Activated CD4-positive, alpha-beta T cell treated with anti-CD3 and anti-CD28 coated beads for 36 hours (primary cell): ENCODE measurements at regions of chr22 and their contacts with region 1.

Region 1: DNA sequence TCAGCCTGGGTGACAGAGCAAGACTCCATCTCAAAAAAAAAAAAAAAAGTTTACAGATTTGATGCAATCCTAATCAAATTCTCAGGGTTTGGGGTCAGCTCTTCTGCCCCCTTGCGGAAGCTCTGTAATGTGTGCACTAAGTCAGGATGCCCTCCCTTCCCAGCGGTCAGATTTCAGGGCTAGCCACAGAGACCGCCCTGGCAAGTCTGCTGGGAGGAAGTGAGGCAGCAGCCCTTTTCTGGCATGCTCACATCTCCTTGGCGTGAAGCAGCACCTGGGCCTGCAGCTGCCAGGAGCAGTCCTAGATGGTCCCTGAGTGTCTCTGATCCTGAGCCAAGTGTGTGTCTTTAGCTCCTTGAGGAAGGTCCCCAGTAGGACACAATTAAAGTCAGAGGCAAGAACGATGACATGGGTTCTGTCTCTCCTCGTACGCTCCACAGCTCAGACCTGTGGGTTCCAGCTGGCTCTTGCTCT is 10.9 kb upstream of the APOBEC3C start:
- DNase-seq: peak; percentile 88
- ATAC-seq: peak; percentile 96
- H3K4me3 Mint-ChIP-seq: no peak overlapping the region
- H3K27ac Mint-ChIP-seq: no peak overlapping the region
- H3K4me1 Mint-ChIP-seq: peaks cover 6% of the 10 kb centered on the region
- H3K27me3 Mint-ChIP-seq: no peaks in the 10 kb centered on the region

Region 2: DNA sequence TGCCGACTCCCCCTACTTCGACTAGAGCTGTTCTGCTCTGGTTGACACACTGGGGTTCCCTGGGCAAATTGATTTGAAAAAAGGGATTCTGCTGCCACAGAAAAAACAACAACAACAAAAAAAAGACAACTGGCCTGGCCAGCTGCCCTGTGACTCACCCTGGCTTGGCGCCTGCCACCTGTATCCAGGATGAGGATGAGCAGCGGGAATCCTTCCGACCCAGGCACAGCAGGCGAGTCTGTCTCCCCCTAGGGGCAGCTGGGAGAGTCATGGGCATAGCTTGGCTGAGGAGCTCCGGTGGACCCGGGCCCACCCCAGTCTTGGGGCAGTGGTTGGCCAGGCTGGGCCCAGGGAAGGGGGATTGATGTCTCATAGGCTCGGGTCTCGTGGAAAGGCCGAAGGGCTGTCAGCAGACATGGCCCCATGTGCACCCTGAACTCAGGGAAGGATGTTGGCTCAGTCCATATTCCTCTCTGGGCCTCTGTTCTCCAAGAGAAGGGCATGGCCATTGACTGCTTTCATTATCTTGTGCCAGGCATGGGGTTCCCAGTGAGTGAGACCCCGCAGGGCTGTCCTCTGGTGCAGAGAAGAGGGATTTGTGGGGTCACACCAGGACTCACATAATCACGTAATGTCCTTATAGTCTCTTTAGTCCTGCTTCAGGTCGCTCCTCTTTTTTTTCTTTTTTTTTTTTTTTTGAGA is 237.0 kb before region 1 on chr22:
- CTCF ChIA-PET with region 1: interaction called, 9 read pairs
- POLR2A ChIA-PET with region 1: no interaction called
- intact Hi-C with region 1: loop called in 1 of 2 experiments (anchors 1 kb)
- DNase-seq: peak; percentile 60
- ATAC-seq: peak; percentile 38
- H3K4me3 Mint-ChIP-seq: no peak overlapping the region
- H3K27ac Mint-ChIP-seq: no peak overlapping the region
- H3K4me1 Mint-ChIP-seq: peaks cover 4% of the 10 kb centered on the region
- H3K27me3 Mint-ChIP-seq: no peaks in the 10 kb centered on the region

Region 3: DNA sequence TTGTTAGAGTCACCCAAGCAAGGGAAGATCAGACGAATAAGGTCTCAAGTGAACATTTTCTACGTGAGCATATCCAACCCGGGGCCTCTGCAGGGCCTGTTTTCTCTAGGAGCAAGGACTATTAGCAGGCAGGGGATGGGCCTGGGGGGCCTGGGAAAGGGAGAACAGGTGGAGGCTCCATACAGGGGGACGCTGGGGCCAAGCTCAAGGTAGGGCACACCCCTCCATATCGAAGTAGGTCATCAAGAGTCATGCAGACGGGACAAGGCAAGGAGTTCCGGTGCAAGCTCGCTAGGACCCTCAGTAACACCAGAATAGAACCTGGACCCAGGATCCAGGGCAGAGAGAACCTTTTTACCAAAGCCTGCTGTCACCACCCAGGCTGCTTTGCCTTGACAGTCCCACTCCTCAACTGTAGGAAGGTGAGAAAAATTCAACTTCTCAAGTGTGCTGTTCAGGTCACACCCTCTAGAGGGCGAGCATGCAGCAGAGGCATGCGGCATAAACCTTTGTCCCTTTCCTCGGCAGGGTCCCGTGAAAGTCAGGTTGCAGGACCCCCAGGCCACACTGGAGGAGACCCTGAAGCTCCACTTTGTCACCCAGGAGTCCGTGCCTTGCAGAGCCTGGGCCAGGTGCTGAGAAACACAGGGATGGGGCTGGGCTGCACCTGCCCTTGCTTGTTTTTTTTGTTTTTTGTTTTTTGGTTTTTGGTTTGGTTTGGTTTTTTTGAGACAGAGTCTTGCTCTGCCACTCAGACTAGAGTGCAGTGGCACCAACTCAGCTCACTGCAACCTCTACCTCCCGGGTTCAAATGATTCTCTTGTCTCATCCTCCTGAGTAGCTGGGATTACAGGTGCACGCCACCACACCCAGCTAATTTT is 29.7 kb before region 1 on chr22:
- CTCF ChIA-PET with region 1: interaction called, 16 read pairs
- POLR2A ChIA-PET with region 1: no interaction called
- intact Hi-C with region 1: loop called (anchors 1 kb)
- DNase-seq: peak; percentile 75
- ATAC-seq: peak; percentile 94
- H3K4me3 Mint-ChIP-seq: no peak overlapping the region
- H3K27ac Mint-ChIP-seq: no peak overlapping the region
- H3K4me1 Mint-ChIP-seq: peaks cover 3% of the 10 kb centered on the region
- H3K27me3 Mint-ChIP-seq: peaks cover 10% of the 10 kb centered on the region

Region 4: DNA sequence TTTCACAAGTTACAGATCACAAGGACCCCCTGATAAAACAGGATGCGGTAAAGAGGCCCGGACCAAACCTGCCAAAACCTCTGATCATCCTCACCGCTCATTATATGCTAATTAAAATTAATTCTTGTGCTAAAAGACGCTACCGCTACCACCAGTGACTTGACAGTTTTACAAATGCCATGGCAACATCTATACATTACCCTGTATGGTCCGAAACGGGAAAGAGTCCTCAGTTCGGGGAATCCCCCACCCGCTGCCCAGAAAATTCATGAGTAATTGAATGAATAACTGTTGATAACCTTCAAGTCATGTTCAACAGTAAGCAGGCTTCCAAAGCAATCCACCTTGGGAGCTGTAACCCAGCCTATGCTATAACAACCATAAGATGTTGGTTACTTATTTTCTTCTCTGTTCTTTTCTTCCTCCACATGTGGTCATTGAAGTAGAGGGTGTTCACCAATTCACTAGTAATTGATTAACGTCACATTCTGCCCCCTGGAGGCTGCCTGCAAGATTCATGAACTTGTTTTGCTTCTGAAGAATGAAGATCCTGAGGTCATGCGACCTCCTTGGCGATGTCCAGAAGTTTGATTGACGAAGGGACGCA is 114.5 kb after region 1 on chr22:
- CTCF ChIA-PET with region 1: interaction called, 3 read pairs
- POLR2A ChIA-PET with region 1: no interaction called
- intact Hi-C with region 1: loop called (anchors 1 kb)
- DNase-seq: peak; percentile 84
- ATAC-seq: peak; percentile 60
- H3K4me3 Mint-ChIP-seq: peak overlapping the region; percentile 10
- H3K27ac Mint-ChIP-seq: peak overlapping the region; percentile 86
- H3K4me1 Mint-ChIP-seq: peaks cover 54% of the 10 kb centered on the region
- H3K27me3 Mint-ChIP-seq: no peaks in the 10 kb centered on the region

Region 5: DNA sequence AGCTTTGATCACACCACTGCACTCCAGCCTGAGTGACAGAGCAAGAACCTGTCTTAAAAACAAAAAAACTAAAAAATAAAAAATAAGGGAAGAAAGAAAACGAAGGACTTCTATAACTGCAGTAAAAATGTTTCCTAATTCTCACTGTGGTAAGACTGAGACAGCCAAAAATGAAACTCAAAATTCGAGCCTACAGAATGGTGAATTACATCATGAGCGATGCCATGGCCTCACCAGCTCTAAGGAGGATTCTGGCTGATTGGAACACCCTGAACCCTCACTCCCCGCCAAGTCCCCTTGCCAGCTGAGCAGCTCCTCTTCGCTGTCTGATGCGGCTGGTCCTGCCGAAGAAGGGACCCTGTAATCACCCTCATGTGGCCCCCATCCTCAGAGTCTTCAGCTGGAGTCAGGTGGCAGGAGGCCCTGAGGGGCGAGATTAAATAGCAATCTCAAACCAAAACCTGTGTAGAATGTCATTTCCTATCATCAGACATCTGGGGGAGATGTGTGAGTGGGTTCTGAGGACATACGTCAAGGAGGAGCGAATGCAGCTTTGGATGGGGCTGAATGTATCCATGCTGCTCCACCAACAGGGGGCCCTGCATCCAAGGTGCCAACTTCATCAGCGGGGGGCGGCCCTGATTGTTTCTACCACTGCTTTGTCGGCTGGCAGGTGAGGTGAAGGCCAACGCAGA is 212.4 kb after region 1 on chr22:
- CTCF ChIA-PET with region 1: no interaction called
- POLR2A ChIA-PET with region 1: no interaction called
- intact Hi-C with region 1: no loop called
- DNase-seq: peak; percentile 61
- ATAC-seq: peak; percentile 78
- H3K4me3 Mint-ChIP-seq: no peak overlapping the region
- H3K27ac Mint-ChIP-seq: no peak overlapping the region
- H3K4me1 Mint-ChIP-seq: peaks cover 5% of the 10 kb centered on the region
- H3K27me3 Mint-ChIP-seq: peaks cover 22% of the 10 kb centered on the region

Region 6: DNA sequence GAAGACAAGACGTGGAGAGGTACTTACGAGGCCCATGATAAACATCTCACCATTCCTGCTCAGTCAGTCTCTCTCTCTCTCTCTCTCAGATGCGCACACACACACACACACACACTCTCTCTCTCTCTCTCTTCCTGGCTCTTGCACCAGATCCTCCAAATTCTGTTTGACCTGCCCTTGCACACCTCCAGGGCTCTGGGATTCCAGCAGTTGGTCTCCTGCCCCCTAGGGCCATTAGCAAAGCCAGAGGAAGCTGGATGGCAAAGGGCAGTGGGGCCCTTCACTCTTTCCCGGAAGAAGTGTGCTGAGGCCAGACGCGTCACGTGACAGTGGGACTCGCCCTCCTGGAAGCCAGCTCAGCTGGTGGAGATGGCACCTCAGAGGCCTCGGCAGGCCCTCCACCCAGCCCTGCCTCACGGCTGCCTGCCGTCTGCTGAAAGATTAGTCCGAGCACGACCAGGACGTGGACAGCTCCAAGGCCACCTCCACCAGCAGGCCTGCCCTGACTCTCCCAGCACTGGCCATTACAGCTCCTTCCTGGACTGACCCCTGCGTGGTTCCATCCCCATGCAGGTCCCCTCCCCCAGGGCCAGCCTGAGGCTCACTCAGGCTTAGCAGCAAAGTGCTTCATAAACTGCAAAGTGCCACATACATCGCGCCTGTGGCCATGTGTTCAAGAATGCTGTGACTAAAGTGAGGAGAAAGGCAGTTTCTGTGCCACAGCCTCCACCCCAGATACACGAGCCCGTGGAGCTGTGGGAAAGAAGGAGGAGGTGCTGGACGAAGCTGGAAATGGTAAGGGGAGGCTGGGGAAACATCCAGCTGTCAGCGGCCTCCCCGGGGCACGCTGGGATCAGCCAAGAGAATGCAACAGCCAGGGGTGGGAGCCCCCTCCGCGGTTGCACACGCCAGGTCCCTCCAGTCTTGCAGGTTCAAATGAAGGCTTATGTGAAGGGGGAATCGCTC is 237.9 kb after region 1 on chr22:
- CTCF ChIA-PET with region 1: no interaction called
- POLR2A ChIA-PET with region 1: no interaction called
- intact Hi-C with region 1: no loop called
- DNase-seq: peak; percentile 74
- ATAC-seq: peak; percentile 40
- H3K4me3 Mint-ChIP-seq: peak overlapping the region; percentile 67
- H3K27ac Mint-ChIP-seq: peak overlapping the region; percentile 85
- H3K4me1 Mint-ChIP-seq: peaks cover 59% of the 10 kb centered on the region
- H3K27me3 Mint-ChIP-seq: peaks cover 24% of the 10 kb centered on the region

Region 7: GRCh38 chr22:39306581-39307361 is 303.6 kb after region 1 on chr22:
- CTCF ChIA-PET with region 1: no interaction called
- POLR2A ChIA-PET with region 1: no interaction called
- intact Hi-C with region 1: loop called in 1 of 2 experiments (anchors 2 kb)
- DNase-seq: peak; percentile 79
- ATAC-seq: peak; percentile 60
- H3K4me3 Mint-ChIP-seq: no peak overlapping the region
- H3K27ac Mint-ChIP-seq: no peak overlapping the region
- H3K4me1 Mint-ChIP-seq: peaks cover 2% of the 10 kb centered on the region
- H3K27me3 Mint-ChIP-seq: no peaks in the 10 kb centered on the region

Region 8: DNA sequence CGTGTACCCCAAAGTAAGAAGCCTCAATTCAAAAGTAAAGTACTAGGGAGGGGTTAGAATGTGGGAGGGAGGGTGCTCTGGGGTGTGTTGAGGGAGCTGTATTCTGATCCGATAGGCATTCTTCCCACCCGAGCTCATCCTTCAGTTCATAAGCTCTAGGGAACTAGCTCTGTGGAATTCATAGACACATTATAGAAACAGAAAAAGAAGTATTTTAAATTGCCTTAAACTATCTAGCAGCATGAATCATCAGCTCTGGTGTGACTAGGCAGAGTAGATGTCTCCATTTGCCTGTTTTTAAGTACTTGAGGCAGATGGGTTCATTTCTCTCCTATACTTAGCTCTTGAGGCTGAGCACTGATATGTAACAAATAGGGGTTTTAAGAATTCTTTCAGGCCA is 1359.9 kb after region 1 on chr22:
- CTCF ChIA-PET with region 1: no interaction called
- POLR2A ChIA-PET with region 1: no interaction called
- intact Hi-C with region 1: no loop called
- DNase-seq: no peak
- ATAC-seq: no peak
- H3K4me3 Mint-ChIP-seq: no peak overlapping the region
- H3K27ac Mint-ChIP-seq: no peak overlapping the region
- H3K4me1 Mint-ChIP-seq: no peaks in the 10 kb centered on the region
- H3K27me3 Mint-ChIP-seq: no peaks in the 10 kb centered on the region